H1 (cell line): ENCODE measurements at regions of chr3 and their contacts with region 1.

Region 1: DNA sequence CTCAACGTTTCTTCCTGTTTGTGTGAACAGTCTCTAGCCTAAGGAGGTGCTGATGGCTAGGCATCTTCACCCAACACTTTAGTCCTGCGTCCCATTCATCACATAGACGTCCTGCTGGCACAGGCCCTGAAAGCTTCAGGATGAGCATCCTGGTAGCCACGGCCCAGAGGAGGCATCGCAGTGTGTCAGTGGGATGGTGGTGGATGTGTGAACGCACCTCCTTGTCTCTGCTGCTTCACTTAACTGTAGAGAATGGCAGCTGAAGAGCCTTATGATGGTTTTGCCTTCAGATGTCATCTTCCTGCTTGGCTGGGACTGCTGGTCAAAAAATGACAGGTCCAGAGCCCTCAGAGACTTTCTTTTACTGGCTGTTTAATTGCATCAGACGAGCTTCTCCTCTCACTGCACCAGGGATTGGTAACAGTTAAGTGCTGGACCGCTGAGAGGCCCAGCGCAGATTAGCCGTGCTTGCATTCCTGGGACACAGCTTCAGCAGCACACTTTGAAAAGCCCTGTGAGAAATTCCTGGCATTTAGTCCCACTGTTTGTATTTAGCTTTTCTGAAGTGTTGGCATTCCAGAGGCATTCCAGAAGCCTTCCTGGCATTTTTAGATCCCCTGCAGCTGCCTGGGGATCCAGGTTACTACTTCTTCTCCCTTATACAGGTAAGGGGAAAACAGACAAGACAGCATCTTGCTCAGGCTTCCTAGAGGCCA is 132.4 kb upstream of the PLXNA1 start:
- DNase-seq: peak; percentile 68 to 85
- H3K4me3 ChIP-seq: no peak overlapping the region
- H3K27ac ChIP-seq: peak overlapping the region; percentile 85
- H3K4me1 ChIP-seq: peaks cover 26 to 33% (median 28%) of the 10 kb centered on the region in 4 experiments
- H3K27me3 ChIP-seq: no peaks in the 10 kb centered on the region
- CTCF ChIP-seq: no peak
- EP300 ChIP-seq: peak in 1 of 2 experiments; percentile 96; a peak in 2 of 3 replicates
- POLR2A ChIP-seq: no peak
- RAD21 ChIP-seq: peak in 1 of 2 experiments; percentile 26; a peak in 3 of 4 replicates

Region 2: DNA sequence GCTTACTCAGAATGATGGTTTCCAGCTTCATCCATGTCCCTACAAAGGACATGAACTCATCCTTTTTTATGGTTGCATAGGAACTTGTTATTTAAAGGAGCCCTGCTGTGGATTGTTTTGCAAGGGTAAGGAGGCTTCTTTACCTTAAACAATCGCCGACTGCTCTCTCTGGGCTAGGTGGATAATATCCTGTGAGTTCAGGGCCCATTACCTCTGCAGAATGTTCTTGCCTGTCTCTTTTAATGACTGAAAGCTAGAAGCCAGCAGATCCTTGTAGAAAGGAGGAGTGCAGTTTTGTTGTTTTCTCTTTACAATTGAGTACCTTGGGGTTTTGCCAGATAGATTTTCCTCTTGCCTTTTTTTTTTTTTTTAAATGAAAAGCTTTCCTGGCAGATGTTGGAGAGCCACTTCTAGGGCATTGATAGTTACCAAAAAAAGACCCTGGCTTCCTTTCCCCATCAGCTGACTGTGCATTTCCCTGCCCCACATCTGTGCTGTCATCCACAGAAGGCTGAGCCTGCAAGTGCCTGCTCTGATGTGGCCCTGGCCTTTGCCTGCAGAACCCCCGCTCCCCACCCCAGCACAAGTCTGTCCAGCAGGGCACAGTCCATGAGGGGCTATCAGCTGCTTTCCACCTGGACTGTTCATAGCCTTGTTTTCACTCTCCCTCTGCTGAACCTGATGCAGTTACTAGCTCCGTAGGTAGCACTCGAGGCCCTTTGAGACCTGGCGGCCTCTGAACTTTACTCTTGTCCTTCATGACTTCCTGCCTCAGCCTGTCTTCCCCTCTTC is 33.3 kb before region 1 on chr3:
- CTCF ChIA-PET with region 1: interaction called, 14 read pairs
- POLR2A ChIA-PET with region 1: interaction called, 3 read pairs
- DNase-seq: no peak
- H3K4me3 ChIP-seq: no peak overlapping the region
- H3K27ac ChIP-seq: no peak overlapping the region
- H3K4me1 ChIP-seq: peaks cover 8 to 20% (median 16%) of the 10 kb centered on the region in 4 experiments
- H3K27me3 ChIP-seq: no peaks in the 10 kb centered on the region
- CTCF ChIP-seq: no peak
- EP300 ChIP-seq: no peak
- POLR2A ChIP-seq: no peak
- RAD21 ChIP-seq: no peak

Region 3: GRCh38 chr3:126835898-126836860 is 14.3 kb before region 1 on chr3:
- CTCF ChIA-PET with region 1: interaction called, 6 read pairs
- POLR2A ChIA-PET with region 1: interaction called, 17 read pairs
- DNase-seq: no peak
- H3K4me3 ChIP-seq: no peak overlapping the region
- H3K27ac ChIP-seq: no peak overlapping the region
- H3K4me1 ChIP-seq: no peaks in the 10 kb centered on the region; a peak in 1 of 7 replicates
- H3K27me3 ChIP-seq: no peaks in the 10 kb centered on the region
- CTCF ChIP-seq: peak in 2 of 3 experiments; percentile 11 to 34; a peak in 2 of 4 replicates
- EP300 ChIP-seq: no peak
- POLR2A ChIP-seq: no peak
- RAD21 ChIP-seq: no peak

Region 4: GRCh38 chr3:126888186-126888760 is 37.7 kb after region 1 on chr3:
- CTCF ChIA-PET with region 1: no interaction called
- POLR2A ChIA-PET with region 1: no interaction called
- DNase-seq: no peak
- H3K4me3 ChIP-seq: no peak overlapping the region
- H3K27ac ChIP-seq: no peak overlapping the region
- H3K4me1 ChIP-seq: no peaks in the 10 kb centered on the region; a peak in 1 of 7 replicates
- H3K27me3 ChIP-seq: no peaks in the 10 kb centered on the region
- CTCF ChIP-seq: no peak
- EP300 ChIP-seq: no peak
- POLR2A ChIP-seq: no peak
- RAD21 ChIP-seq: no peak

Region 5: DNA sequence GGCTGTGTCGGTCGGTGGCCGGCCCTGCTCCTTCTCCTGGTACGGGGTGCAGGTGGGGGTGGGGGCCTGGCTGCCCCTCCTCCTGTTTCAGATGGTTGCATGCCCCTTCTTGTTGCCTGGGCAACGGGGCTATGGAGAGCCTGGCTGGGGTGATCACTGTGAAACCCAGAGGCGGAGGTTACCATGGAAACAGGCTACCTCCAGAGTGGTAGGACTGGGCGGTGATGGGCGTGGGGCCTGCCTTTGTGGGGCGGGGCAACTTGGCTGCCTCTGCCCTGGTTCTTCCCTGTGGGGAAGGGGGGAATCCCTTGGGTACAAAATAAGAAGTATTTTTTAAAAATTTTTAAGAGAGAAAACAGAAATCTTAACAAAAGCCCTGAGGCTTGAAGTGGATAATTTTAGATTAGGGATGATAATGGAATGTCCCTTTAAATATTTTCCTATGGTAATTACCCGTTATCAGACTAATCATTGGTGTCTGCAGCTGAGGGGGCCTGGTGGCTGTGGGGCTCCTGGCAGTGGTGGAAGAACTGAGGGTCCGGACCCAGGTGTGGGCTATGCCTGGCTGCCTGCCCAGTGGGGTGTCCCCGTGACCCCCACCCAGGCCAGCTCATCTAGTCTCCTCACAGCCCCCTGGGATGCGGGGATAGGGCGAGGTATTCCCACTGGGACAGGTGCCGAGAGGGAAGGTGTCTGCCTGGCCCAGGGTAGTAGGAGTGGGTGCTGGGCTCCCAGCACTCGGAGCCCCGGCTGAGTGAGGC is 164.9 kb after region 1 on chr3:
- CTCF ChIA-PET with region 1: no interaction called
- POLR2A ChIA-PET with region 1: no interaction called
- DNase-seq: no peak
- H3K4me3 ChIP-seq: no peak overlapping the region
- H3K27ac ChIP-seq: no peak overlapping the region
- H3K4me1 ChIP-seq: no peaks in the 10 kb centered on the region
- H3K27me3 ChIP-seq: no peaks in the 10 kb centered on the region
- CTCF ChIP-seq: no peak
- EP300 ChIP-seq: no peak
- POLR2A ChIP-seq: no peak
- RAD21 ChIP-seq: no peak